ENCODE measurements at regions of chr10 and their contacts with region 1.

Region 1: DNA sequence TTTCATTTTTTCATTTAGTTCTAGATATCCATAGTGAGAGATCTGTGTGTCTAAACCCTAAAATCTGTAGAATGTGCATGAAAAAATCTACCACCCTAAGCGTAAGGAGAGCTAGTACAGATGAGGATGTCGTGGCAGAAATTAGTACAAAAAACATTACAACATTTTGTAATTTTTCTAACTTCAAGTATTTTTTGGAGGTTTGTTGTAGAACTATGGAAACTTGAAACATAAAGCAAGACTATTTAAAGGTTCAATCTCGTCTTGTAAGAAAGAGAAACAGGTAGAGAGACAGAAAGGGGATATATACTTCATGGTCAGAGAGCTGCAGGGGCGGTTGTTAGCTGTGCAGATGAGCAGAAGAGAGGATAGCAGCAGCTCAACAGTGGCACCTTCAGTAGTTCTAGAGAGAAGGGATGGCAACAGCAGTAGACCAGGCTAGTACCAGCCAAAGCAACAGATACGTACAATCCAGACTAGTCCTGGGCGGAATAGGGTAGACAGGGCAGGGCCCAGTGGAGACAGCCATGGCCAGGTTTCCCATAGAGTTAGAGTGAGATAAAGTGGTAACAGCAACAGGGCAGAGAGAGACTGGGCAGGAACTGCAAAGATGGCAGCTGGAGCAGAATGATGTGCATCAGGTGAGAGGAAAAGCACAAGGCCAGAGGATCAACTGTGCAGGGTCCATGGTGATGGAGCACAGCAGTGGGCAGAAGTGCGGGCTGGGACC is 145.2 kb downstream of the FRMD4A start:
- DNase-seq: peak in 5 of 9 experiments; percentile 16 to 86 (median 56)
- ATAC-seq: peak; percentile 76
- H3K4me3 ChIP-seq: peak overlapping the region; percentile 2 to 14
- H3K4me3 Mint-ChIP-seq: peak overlapping the region; percentile 48
- H3K27ac ChIP-seq: peak overlapping the region; percentile 30 to 75
- H3K27ac Mint-ChIP-seq: peak overlapping the region; percentile 91
- H3K4me1 ChIP-seq: peaks cover 19% of the 10 kb centered on the region
- H3K4me1 Mint-ChIP-seq: peaks cover 25% of the 10 kb centered on the region
- H3K27me3 ChIP-seq: peaks cover 0 to 4% of the 10 kb centered on the region in 2 experiments
- H3K27me3 Mint-ChIP-seq: peaks cover 15% of the 10 kb centered on the region
- CTCF ChIP-seq: no peak

Region 2: DNA sequence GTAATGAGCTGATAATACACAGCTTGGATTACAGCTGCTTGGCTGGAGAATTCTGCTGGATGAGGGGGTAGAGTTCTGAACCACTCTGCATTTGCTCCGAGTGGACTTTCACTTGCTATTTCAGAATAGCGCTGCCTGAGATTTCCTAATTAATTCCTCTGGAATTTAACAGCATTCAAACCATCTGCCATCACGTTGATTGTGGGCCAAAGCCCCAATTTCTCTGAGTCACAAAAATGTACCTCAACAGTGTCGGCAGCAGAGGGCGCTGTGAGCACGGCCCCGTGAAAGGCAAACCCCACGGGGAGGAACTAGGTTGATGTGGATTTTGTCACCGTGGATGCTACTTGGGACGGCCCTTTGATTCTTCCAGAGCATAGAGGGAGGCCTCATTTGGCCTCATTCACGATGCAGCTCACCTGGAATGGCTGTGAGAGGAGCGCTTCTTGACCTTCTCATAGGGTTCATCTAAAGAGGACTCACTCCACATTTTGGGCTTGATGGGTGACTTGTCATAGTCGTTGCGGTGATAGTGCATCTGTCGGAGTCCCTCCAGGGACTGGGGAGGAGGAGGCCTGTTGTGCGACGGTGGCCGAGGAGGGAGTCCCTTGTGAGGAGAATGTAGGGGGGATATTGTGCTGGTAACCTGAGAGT is 525.5 kb before region 1 on chr10:
- CTCF ChIA-PET with region 1: no interaction called
- POLR2A ChIA-PET with region 1: no interaction called
- intact Hi-C with region 1: loop called in 1 of 2 experiments (anchors 5 kb)
- DNase-seq: peak; percentile 43 to 77 (median 69)
- ATAC-seq: peak; percentile 79
- H3K4me3 ChIP-seq: no peak overlapping the region
- H3K4me3 Mint-ChIP-seq: peak overlapping the region; percentile 4
- H3K27ac ChIP-seq: no peak overlapping the region
- H3K27ac Mint-ChIP-seq: no peak overlapping the region
- H3K4me1 ChIP-seq: peaks cover 16% of the 10 kb centered on the region
- H3K4me1 Mint-ChIP-seq: peaks cover 24% of the 10 kb centered on the region
- H3K27me3 ChIP-seq: no peaks in the 10 kb centered on the region
- H3K27me3 Mint-ChIP-seq: no peaks in the 10 kb centered on the region
- CTCF ChIP-seq: peak; percentile 94

Region 3: DNA sequence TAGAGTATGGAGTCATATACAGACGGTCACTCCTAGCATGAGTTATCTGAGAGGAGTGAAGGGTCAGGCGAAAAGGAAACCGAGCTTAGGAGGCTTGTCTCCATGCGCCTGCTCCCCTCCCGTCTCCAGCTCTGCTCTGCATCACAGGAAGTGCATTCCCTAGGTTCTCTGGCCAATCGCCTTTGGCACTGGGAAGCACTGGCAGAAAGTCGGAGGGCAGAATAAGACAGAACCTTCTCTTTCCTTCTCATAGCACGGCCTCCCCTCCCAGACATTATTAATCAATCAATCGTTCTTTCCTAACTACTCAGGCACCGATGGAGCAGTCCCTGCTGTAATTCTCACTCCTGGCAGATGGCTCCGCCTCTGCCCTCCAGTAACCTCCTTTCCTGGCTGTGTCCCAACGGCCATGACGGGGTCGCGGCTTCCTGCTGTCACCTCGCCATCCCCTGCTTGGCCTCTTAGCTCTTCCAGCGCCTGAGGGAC is 31.9 kb before region 1 on chr10:
- CTCF ChIA-PET with region 1: no interaction called
- POLR2A ChIA-PET with region 1: no interaction called
- intact Hi-C with region 1: no loop called
- DNase-seq: no peak
- ATAC-seq: no peak
- H3K4me3 ChIP-seq: no peak overlapping the region
- H3K4me3 Mint-ChIP-seq: no peak overlapping the region
- H3K27ac ChIP-seq: no peak overlapping the region
- H3K27ac Mint-ChIP-seq: no peak overlapping the region
- H3K4me1 ChIP-seq: no peaks in the 10 kb centered on the region
- H3K4me1 Mint-ChIP-seq: no peaks in the 10 kb centered on the region
- H3K27me3 ChIP-seq: peaks cover 0 to 5% of the 10 kb centered on the region in 2 experiments
- H3K27me3 Mint-ChIP-seq: peaks cover 39% of the 10 kb centered on the region
- CTCF ChIP-seq: no peak

Measured in CD8-positive, alpha-beta T cell (primary cell).